ENCODE measurements at regions of chr3 and their contacts with region 1.

Region 1: GRCh38 chr3:47035634-47036033 is 56.2 kb downstream of the NBEAL2 start:
- DNase-seq: no peak
- H3K4me3 Mint-ChIP-seq: no peak overlapping the region
- H3K27ac Mint-ChIP-seq: no peak overlapping the region
- H3K4me1 Mint-ChIP-seq: peaks cover 43% of the 10 kb centered on the region
- H3K27me3 Mint-ChIP-seq: no peaks in the 10 kb centered on the region

Region 2: GRCh38 chr3:47016934-47017435 is 18.6 kb before region 1 on chr3:
- CTCF ChIA-PET with region 1: interaction called, 3 read pairs
- POLR2A ChIA-PET with region 1: interaction called, 7 read pairs
- intact Hi-C with region 1: loop called (anchors 1 kb)
- DNase-seq: peak; percentile 71
- H3K4me3 Mint-ChIP-seq: peak overlapping the region; percentile 8
- H3K27ac Mint-ChIP-seq: peak overlapping the region; percentile 92
- H3K4me1 Mint-ChIP-seq: peaks cover 47% of the 10 kb centered on the region
- H3K27me3 Mint-ChIP-seq: no peaks in the 10 kb centered on the region